Posterior cingulate gyrus (tissue), 11 donors: ENCODE measurements at regions of chr15 and their contacts with region 1.

Region 1: GRCh38 chr15:57527382-57528091 is 64.2 kb upstream of the MYZAP start:
- DNase-seq: no peak

Region 2: DNA sequence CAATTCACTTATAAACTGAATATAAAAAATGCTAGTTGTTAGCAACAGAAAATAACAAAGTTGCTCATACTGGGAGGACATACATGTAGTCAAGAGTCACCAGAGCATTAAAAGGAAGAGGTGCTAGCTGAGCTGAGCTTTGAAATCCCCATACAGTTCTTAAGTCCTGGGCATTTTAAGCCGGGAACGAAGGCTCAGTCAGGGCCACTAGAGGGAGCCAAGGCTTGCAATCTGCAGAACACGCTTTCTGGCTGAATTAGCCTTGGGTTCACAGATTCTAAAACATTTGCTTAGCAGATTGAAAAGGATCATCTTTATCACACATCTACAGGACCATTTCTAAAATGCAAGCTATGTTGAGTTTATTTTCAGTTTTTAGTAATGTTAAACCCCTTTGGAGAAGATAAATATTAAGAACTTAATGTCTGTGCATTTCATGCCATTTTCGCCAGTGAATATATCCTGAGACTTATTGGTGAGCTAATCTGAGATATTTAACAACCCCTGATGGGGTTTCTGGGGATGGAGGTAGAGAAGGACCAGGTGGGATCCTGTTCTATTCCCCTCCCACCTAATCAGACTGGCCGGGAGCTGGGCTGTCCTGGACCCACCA is 1036.3 kb before region 1 on chr15:
- intact Hi-C with region 1: loop called (anchors 10 kb)
- DNase-seq: peak; percentile 55 to 96 (median 78)

Region 3: DNA sequence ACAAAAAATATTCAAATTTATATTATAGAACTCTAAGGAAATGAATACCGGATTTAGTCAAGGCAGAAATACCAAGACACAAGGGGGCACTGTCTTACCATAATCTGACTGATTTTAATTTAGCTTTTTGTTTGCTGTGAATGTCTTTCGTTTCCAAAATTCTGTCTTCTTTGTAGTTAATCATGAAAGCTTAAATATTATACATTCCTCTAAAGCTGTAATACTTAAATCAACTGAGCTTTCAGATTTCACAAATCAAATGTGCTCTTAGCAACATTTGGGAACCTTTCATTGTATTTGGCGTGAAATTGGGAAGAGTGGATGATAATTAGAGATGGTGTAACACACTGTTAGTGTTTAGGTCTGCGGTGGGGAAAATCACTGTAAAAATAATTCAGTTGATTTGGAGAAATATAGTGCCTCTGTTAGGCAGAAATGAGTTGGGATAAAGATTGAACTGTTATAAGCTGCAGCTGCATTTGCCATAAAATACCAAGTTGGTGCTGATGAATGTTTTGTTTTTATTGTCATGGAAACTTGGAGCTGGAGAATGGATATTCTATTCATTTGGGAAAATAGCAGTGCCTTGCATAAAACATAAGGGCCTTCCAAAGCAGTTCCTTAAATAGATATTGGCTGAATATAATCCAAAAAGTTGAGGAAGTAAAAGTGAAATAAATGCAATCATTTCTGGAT is 380.9 kb before region 1 on chr15:
- intact Hi-C with region 1: loop called (anchors 10 kb)
- DNase-seq: no peak

Region 4: DNA sequence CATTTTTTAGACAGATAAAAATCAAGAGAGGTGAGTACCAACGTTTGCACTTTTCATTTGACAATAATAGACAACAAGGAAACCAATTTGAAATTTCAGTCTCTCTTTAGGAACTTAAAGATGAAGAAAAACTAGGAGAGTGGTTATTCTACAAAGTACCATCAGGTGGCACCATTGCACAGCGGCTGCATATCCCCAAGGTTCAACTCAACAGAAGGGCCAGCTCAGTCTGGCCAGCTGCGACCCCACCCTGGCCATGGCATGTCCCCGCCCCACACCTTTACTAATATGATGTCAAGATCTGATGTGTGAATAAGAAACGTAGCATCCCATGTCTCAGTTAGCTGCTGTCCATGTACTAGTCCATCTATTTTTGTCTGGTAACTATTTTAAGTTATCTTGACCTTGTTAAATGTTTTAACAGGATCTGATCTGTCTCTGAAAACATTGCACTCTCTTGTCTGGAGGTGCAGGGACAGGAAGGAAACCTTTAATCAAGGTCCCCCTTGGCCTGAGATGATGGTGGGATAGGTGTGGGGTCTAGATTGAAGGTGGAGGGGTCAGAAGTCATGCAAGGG is 186.8 kb before region 1 on chr15:
- intact Hi-C with region 1: loop called (anchors 1 kb)
- DNase-seq: peak in 8 of 10 donors; percentile 26 to 93 (median 48)

Region 5: GRCh38 chr15:57462381-57462780 is 65.2 kb before region 1 on chr15:
- intact Hi-C with region 1: loop called (anchors 10 kb)
- DNase-seq: no peak

Region 6: DNA sequence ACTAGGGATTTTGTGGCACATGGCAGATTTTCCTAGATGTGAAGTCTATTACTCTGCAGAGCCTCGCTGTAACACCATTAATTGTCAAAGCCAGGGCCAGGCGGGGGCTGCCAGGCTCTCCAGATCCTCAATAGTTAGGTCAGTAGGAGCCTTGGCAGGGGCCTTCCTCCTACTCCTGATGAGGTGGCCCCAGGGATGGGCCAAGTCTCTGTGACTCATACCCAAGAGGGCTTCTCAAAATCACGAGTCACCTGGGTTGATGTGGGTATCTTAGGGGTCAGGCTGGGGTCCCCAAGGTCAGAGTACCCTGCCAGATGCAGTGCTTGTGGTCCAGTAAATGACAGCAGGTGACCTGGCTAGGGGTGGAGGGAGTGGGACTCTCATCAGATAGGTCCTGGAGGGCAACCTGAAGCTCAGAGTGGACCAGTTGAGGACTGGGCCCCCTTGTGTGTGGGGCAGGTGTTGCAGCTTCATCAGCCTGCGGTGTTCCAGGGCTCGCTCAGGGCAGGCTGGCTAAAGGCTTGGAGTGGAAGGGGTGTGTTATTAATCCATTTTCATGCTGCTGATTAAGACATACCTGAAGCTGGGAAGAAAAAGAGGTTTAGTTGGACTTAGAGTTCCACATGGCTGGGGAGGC is 24.4 kb before region 1 on chr15:
- intact Hi-C with region 1: no loop called
- DNase-seq: no peak

Region 7: GRCh38 chr15:57662805-57663204 is 135.3 kb after region 1 on chr15:
- intact Hi-C with region 1: no loop called
- DNase-seq: no peak